Activated CD8-positive, alpha-beta T cell treated with anti-CD3 and anti-CD28 coated beads, Interleukin-2, amount 10 ng/mL, durations not matched to agents 7 days and 5 days (primary cell): ENCODE measurements at regions of chr2 and their contacts with region 1.

Region 1: DNA sequence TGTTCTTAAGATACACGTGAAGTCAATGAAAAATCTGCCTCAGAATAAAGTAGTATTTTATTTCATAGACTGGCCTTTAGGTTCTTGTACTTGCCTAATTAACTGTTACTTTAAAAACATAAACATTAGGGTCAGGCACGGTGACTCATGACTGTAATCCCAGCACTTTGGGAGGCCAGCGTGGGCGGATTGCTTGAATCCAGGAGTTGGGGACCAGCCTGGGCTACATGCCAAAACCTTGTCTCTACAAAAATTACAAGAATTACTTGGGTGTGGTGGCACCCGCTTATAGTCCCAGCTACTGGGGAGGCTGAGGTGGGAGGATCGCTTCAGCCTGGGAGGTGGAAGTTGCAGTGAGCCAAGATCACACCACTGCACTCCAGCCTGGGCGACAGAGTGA is 16.0 kb upstream of the SNORC start:
- DNase-seq: no peak
- ATAC-seq: no peak
- H3K4me3 Mint-ChIP-seq: no peak overlapping the region
- H3K27ac Mint-ChIP-seq: no peak overlapping the region
- H3K4me1 Mint-ChIP-seq: no peaks in the 10 kb centered on the region
- H3K27me3 Mint-ChIP-seq: no peaks in the 10 kb centered on the region

Region 2: GRCh38 chr2:232842689-232843088 is 11.4 kb before region 1 on chr2:
- CTCF ChIA-PET with region 1: interaction called, 14 read pairs
- POLR2A ChIA-PET with region 1: no interaction called
- DNase-seq: no peak
- ATAC-seq: no peak
- H3K4me3 Mint-ChIP-seq: no peak overlapping the region
- H3K27ac Mint-ChIP-seq: no peak overlapping the region
- H3K4me1 Mint-ChIP-seq: peaks cover 34% of the 10 kb centered on the region
- H3K27me3 Mint-ChIP-seq: no peaks in the 10 kb centered on the region